CD8-positive, alpha-beta T cell (primary cell): ENCODE measurements at regions of chr1 and their contacts with region 1.

Region 1: DNA sequence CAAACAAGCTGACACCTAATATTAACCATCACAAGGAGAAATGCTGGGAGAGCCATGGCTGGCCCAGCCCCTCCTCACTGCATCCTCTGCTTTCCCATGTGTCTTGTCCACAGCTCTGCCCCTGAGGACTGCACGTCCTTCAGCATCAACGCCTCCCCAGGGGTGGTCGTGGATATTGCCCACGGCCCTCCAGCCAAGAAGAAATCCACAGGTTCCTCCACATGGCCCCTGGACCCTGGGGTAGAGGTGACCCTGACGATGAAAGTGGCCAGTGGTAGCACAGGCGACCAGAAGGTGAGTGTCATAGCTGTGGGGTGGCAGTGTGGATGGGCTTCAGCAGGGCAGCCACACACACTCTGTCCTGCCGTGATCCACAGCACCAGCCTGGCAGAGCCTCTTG is 22.9 kb downstream of the PADI4 start:
- DNase-seq: no peak
- ATAC-seq: no peak
- H3K4me3 ChIP-seq: no peak overlapping the region
- H3K4me3 Mint-ChIP-seq: no peak overlapping the region
- H3K27ac ChIP-seq: no peak overlapping the region
- H3K27ac Mint-ChIP-seq: no peak overlapping the region
- H3K4me1 ChIP-seq: no peaks in the 10 kb centered on the region
- H3K4me1 Mint-ChIP-seq: no peaks in the 10 kb centered on the region
- H3K27me3 ChIP-seq: no peaks in the 10 kb centered on the region
- H3K27me3 Mint-ChIP-seq: peaks cover 30% of the 10 kb centered on the region
- CTCF ChIP-seq: no peak

Region 2: DNA sequence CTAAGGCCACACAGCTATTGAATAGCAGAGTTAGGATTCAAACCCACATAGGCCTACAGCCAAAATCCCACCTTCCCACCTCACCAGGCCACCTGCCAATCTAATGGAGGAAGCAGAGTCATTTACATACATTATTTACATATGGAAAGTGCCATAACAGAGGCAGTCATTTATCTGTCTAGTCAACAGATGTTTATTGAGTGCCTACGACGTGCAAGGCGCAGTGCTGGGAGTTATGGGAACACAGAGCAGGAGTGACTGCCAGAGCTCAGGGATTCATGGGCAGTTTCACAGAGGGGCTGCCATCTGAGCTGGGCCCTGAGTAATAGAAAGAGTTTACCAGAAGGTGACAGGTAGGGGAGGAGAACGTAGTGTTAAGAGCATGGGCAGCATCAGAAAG is 30.8 kb after region 1 on chr1:
- CTCF ChIA-PET with region 1: no interaction called
- POLR2A ChIA-PET with region 1: no interaction called
- intact Hi-C with region 1: loop called in 1 of 2 experiments (anchors 2 kb)
- DNase-seq: no peak
- ATAC-seq: no peak
- H3K4me3 ChIP-seq: no peak overlapping the region
- H3K4me3 Mint-ChIP-seq: no peak overlapping the region
- H3K27ac ChIP-seq: no peak overlapping the region
- H3K27ac Mint-ChIP-seq: no peak overlapping the region
- H3K4me1 ChIP-seq: peaks cover 2% of the 10 kb centered on the region
- H3K4me1 Mint-ChIP-seq: peaks cover 3% of the 10 kb centered on the region
- H3K27me3 ChIP-seq: peaks cover 0 to 2% of the 10 kb centered on the region in 2 experiments
- H3K27me3 Mint-ChIP-seq: peaks cover 8% of the 10 kb centered on the region
- CTCF ChIP-seq: no peak